Right ventricle myocardium inferior (tissue), 1 donor: ENCODE measurements at regions of chr10 and their contacts with region 1.

Region 1: DNA sequence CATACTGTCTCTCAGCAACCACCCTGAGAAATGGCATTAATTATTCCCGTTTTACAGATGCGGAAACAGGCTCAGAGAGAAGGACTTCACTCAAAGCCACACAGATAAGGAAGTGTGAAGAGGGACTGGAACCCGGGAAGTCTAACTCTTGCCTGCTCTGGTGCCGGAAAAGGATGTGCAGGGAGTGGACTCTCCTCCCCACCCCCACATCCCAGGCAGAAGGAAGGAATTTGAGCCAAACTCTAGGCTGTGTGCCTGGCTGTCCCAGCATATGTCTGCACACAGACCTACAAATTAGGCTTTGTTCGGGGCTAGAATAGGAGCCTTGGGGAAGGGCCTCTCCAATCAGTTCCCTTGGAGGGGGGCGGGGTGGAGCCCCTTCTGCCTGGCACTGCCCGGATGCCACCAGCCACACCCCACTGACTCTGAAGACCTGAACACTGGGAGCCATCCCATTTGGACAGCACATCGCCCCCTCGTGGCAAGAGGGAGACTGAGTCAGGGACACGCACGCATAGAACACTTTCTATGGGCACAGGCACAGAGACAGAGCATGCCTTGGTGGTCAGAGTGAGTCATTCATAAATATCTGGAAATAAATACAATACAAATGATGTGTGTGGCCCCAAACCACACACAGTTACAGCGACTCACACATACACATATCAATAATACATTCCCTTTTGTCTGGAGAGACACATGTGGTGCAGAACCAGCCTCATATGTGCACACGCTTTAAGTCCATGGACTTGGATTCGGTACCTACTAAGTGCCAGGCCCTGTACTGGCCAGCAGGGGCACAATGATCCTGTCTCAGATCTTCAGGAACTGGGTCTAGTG is 13.1 kb downstream of the LZTS2 start:
- DNase-seq: peak; percentile 91
- ATAC-seq: peak; percentile 92

Region 2: GRCh38 chr10:100562008-100562711 is 450.6 kb before region 1 on chr10:
- intact Hi-C with region 1: loop called (anchors 10 kb)
- DNase-seq: peak; percentile 82
- ATAC-seq: peak; percentile 75

Region 3: DNA sequence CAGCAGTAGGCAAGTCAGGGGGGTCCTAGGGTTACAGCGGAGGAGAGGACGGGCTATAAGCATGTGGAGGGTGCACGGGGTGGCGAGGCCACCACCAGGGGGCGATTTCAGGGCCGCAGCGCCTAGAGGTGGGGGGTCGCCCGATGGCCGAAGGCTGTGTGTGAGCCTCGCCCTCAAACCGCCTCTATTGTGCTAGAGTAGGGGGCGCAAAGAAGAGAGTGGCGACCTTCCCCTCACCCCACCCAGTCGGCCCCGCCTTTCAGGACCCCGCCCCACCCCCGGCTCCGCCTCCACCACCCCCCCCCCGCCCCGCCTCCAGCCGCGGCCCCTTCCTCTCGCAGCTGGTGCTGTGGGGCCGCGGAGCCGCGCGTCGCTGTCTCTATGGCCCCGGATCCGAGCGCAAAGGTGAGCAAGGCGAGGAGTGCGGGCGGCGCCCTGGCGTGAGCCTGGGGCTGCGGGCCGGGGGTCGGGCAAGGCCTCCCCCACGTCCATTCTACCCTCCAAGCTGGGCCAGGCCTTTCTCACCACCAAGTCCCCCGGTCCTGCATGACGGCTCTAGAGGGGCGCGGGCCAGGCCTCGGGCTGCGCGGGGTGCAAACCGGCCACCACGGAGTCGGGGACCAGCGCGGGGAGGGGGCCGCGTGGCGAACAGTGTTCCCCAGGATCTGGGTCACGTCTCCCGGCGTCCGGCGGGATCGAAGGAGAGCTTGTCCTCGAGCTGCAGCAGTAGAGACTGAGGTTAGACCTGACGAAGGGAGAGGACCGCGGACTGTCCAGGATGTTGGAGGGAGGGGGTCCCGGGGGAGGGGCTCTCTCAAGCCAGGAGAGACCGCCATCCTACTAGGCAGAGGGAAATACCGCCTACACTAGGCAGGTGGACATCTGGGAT is 43.3 kb before region 1 on chr10 and contains the start of gene SEMA4G:
- intact Hi-C with region 1: loop called (anchors 2 kb)
- DNase-seq: peak; percentile 74
- ATAC-seq: peak; percentile 69
- total RNA-seq, gene SEMA4G: 1.5 TPM

Region 4: GRCh38 chr10:100993986-100994708 is 18.6 kb before region 1 on chr10:
- intact Hi-C with region 1: loop called (anchors 1 kb)
- DNase-seq: no peak
- ATAC-seq: no peak

Region 5: GRCh38 chr10:100998991-100999741 is 13.6 kb before region 1 on chr10:
- intact Hi-C with region 1: loop called (anchors 1 kb)
- DNase-seq: peak; percentile 93
- ATAC-seq: peak; percentile 78